Left colon (tissue), 2 donors: ENCODE measurements at regions of chr17 and their contacts with region 1.

Region 1: GRCh38 chr17:1908699-1909309 is 79.0 kb downstream of the RPA1 start:
- DNase-seq: peak; percentile 41 to 55
- ATAC-seq: peak; percentile 84

Region 2: GRCh38 chr17:1847191-1847590 is 61.6 kb before region 1 on chr17:
- intact Hi-C with region 1: no loop called
- DNase-seq: no peak
- ATAC-seq: no peak

Region 3: GRCh38 chr17:1880851-1881630 is 27.8 kb before region 1 on chr17:
- intact Hi-C with region 1: no loop called
- DNase-seq: no peak
- ATAC-seq: no peak

Region 4: GRCh38 chr17:2029911-2030778 is 121.3 kb after region 1 on chr17 and contains the start of gene DPH1:
- intact Hi-C with region 1: loop called (anchors 5 kb)
- DNase-seq: peak; percentile 86 to 92
- ATAC-seq: peak; percentile 91
- total RNA-seq, gene DPH1: 31.2 to 35.1 TPM